Right ventricle myocardium inferior (tissue), 1 donor: ENCODE measurements at regions of chr18 and their contacts with region 1.

Region 1: DNA sequence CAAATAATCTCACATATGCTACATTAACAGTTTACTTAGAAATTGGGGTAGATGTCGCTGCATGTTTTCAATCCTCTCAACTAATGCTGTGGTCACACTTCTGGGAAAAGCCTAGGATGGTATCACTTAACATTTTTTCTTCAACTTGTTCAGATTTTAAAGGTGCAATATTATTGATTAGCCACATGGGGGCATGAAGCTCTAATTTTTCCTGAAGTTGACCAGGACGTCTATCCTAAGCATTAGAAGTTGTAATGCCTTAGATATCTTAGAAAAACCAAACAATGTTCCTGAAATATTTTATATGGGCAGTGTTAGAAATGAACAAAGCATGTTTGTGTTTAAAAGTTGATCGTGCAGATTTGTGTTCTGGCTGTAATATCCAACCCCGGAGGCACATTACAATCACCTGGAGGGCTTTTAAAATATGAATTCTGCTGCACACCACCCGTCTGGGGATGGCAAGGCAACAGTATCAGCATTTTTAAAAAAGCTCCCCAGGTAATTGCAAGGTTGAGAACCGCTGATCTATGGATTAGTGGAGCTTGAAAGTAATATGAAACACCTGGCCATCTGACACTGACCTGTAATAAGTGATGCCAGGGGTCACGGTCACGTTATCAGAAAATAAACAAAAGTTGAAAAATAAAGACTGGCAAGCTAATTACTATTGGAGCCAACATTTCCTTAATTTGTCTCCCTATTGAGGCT is 100.5 kb upstream of the LMAN1 start:
- DNase-seq: no peak
- ATAC-seq: peak; percentile 45

Region 2: GRCh38 chr18:59249205-59249774 is 210.2 kb before region 1 on chr18:
- intact Hi-C with region 1: no loop called
- DNase-seq: no peak
- ATAC-seq: peak; percentile 39

Region 3: GRCh38 chr18:59488899-59489298 is 29.4 kb after region 1 on chr18:
- intact Hi-C with region 1: no loop called
- DNase-seq: no peak
- ATAC-seq: no peak

Region 4: DNA sequence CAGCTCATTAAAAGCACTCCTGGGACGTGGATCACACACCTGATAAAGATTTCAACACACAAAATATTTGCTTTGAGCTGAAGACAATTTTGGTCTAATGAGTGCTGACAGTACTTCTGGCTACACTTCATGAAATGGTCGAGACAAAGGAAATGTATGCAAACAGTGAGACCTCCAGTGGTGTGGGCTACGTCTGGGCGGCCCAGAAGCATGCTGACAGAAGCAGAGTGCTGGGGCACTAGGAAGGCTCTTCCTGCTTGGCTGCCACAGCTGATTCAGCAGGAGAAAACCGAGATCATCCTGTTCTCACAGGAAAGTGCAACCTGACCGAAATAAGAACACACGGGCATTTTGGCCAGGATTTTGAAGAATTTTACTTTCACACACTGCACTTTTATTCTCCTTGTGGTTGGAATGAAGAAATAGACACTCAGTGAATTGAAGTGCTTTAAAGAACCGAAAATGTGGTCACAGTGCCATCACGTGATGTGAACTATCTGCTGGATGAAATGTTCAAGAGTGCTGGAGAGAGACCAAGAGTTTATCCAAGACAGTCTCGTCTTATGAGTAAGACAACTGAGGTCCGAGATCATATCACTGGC is 88.2 kb after region 1 on chr18:
- intact Hi-C with region 1: loop called (anchors 5 kb)
- DNase-seq: no peak
- ATAC-seq: peak; percentile 65

Region 5: DNA sequence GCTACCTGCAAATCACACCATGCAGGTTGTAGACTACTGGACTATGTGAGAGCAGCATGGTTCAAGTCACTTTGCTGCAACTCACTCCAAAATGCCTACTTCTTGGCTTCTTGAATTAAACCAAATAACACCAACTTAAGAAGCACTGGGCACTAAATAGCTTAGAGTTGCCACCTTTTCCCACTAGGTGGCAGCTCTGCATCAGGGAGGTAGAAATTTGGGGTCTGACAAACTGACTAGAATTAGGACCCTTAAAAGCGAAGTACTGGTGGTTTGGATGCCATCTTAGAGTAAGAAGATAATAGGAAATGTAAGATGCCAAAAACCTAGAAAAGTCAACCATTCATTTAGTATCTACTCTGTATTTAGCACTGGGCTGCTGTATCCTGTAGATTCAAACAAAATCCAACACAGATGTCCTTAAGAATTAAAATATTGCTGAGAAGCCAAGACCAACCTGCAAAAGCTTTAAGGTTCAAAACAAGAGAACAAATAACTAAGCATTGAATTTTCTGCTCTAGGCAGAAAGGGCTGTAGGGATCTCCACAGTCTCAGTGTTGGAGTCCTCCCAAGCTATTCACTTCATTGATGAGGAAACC is 172.2 kb after region 1 on chr18:
- intact Hi-C with region 1: loop called (anchors 10 kb)
- DNase-seq: no peak
- ATAC-seq: no peak

Region 6: DNA sequence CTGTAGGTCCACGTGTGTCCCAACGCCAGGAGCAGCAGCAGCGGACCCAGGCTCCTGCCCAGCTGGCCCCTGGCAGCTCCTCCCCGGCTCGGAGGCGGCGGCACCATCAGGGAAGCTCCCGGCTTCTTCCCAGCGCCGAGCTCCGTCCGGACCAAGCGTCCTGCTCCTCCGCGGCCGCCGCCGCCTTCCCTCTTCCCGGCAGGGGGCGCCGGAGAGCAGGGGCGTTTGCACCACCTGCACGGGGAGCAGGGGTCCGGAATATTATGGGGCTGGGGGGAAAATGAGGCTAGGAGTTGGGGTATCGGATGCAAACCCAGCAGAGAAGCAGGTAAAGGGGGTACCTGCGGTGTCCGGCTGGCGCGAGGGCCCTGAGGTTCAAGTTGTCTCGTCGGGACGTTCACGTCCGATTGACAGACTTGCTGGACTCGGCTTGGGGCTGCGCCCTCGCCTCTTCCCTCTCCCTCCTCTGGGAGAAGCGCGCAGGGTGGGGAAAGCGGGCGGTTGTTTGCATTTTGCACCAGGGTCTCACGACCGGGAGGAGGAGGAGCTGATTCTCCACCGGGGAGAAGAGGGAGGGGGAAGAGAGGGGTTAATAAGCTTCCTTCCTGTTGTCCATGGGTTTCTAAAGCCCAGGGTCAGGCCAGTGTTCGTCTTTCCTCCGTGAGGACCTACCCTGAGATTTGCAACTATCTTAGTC is 237.9 kb after region 1 on chr18 and contains the start of gene CCBE1:
- intact Hi-C with region 1: loop called (anchors 5 kb)
- DNase-seq: peak; percentile 77
- ATAC-seq: peak; percentile 87
- total RNA-seq, gene CCBE1: 3.6 TPM